AG04450 (cell line): ENCODE measurements at regions of chr7 and their contacts with region 1.

Region 1: GRCh38 chr7:6183770-6184169 is 88.7 kb downstream of the CYTH3 start:
- DNase-seq: no peak
- H3K4me3 ChIP-seq: no peak overlapping the region
- H3K27ac ChIP-seq: no peak overlapping the region
- H3K27me3 ChIP-seq: no peaks in the 10 kb centered on the region
- CTCF ChIP-seq: no peak

Region 2: GRCh38 chr7:6121141-6121540 is 62.6 kb before region 1 on chr7:
- CTCF ChIA-PET with region 1: no interaction called
- POLR2A ChIA-PET with region 1: no interaction called
- DNase-seq: no peak
- H3K4me3 ChIP-seq: no peak overlapping the region
- H3K27ac ChIP-seq: no peak overlapping the region
- H3K27me3 ChIP-seq: no peaks in the 10 kb centered on the region
- CTCF ChIP-seq: no peak

Region 3: DNA sequence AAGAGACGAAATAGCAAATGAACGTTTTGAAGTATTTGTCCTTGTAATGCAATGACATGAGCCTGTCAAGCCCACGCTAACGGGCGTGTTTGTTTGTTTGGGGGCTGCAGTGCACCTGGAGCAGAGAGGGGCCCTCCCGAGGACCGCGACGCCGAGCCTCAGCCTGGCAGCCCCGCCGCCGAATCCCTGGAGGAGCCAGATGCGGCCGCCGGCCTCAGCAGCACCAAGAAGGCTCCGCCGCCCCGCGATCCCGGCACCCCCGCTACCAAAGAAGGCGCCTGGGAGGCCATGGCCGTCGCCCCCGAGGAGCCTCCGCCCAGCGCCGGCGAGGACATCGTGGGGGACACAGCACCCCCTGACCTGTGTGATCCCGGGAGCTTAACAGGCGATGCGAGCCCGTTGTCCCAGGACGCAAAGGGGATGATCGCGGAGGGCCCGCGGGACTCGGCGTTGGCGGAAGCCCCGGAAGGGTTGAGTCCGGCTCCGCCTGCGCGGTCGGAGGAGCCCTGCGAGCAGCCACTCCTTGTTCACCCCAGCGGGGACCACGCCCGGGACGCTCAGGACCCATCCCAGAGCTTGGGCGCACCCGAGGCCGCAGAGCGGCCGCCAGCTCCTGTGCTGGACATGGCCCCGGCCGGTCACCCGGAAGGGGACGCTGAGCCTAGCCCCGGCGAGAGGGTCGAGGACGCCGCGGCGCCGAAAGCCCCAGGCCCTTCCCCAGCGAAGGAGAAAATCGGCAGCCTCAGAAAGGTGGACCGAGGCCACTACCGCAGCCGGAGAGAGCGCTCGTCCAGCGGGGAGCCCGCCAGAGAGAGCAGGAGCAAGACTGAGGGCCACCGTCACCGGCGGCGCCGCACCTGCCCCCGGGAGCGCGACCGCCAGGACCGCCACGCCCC is 29.9 kb before region 1 on chr7:
- CTCF ChIA-PET with region 1: no interaction called
- POLR2A ChIA-PET with region 1: no interaction called
- DNase-seq: no peak
- H3K4me3 ChIP-seq: no peak overlapping the region
- H3K27ac ChIP-seq: no peak overlapping the region
- H3K27me3 ChIP-seq: no peaks in the 10 kb centered on the region
- CTCF ChIP-seq: no peak

Region 4: DNA sequence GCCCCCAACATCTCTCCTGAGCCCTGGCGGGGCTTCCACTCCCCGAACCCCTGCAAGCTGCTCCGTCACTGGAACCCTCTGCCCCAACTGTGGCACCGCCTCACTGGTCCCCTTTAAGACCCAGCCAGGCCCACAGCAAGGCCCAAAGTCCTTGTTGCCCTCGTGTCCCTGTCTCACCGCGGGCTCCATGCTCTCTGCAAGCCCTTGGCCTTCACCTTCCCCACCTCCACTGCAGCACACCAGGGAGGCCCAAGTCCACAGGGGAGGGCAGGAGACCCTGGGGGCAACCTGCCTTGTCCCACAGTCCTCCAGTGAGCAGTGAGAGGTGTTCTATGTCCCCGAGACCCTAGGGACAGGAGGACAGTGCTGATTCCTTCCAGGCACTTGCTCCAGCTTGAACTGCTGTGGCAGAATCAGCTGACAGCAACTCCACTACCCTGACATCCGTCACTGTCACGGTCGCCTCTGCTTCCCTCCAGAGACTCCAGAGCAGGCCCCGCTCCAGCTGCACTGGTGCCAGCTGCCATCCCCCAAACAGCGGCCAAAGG is 16.7 kb before region 1 on chr7:
- CTCF ChIA-PET with region 1: no interaction called
- POLR2A ChIA-PET with region 1: no interaction called
- DNase-seq: no peak
- H3K4me3 ChIP-seq: no peak overlapping the region
- H3K27ac ChIP-seq: no peak overlapping the region
- H3K27me3 ChIP-seq: no peaks in the 10 kb centered on the region
- CTCF ChIP-seq: no peak

Region 5: DNA sequence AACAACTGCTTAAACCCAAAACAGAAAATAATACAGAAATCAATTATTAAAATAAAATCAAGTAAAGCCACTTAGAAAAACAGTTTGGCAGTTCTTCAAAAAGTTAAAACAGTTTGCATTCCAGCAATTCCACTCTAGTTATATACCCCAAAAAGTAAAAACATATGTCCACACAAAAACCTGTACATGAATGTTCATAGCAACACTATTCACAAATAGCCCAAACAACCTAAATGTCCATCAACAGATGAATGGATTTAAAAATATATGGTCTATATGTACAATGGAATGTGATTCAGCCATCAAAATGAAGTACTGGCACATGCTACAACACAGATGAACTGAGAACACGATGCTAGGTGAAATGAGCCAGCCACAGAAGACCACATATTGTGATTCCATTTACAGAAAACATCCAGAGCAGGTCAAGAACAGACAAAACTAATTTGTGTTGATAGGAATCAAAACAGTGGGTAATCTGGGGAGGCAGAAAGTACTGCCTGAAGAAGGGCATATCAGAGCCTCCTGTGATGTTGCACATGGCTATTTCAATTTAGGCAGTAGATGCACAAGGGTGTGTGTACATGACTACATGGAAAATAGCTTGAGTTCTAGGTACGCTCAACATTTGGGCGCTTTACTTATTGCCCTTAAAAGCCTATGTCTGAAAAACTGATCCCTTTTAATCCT is 22.3 kb after region 1 on chr7:
- CTCF ChIA-PET with region 1: interaction called, 10 read pairs
- POLR2A ChIA-PET with region 1: no interaction called
- DNase-seq: no peak
- H3K4me3 ChIP-seq: no peak overlapping the region
- H3K27ac ChIP-seq: no peak overlapping the region
- H3K27me3 ChIP-seq: no peaks in the 10 kb centered on the region
- CTCF ChIP-seq: no peak